PC-3 (cell line): ENCODE measurements at regions of chr5 and their contacts with region 1.

Region 1: GRCh38 chr5:78886341-78887230 is 98.5 kb downstream of the ARSB start:
- DNase-seq: peak; percentile 32
- ATAC-seq: no peak
- H3K4me3 ChIP-seq: no peak overlapping the region
- H3K27ac ChIP-seq: no peak overlapping the region
- H3K4me1 ChIP-seq: 0 out of 2 replicates have a peak, but pooled peaks cover 5% of the 10 kb centered on the region
- H3K27me3 ChIP-seq: no peaks in the 10 kb centered on the region
- CTCF ChIP-seq: peak; percentile 66

Region 2: GRCh38 chr5:78648359-78649210 is 238.0 kb before region 1 on chr5 and contains the start of gene LHFPL2:
- CTCF ChIA-PET with region 1: no interaction called
- POLR2A ChIA-PET with region 1: no interaction called
- intact Hi-C with region 1: loop called (anchors 10 kb)
- DNase-seq: peak; percentile 59
- ATAC-seq: peak; percentile 74
- H3K4me3 ChIP-seq: peak within 1 kb of the TSS; percentile 77
- H3K27ac ChIP-seq: peak within 1 kb of the TSS; percentile 70
- H3K4me1 ChIP-seq: peaks cover 26% of the 10 kb centered on the region
- H3K27me3 ChIP-seq: no peaks in the 10 kb centered on the region
- CTCF ChIP-seq: no peak
- total RNA-seq, gene LHFPL2: 19.4 and 21.7 TPM in 2 replicates

Region 3: GRCh38 chr5:78811121-78811817 is 75.3 kb before region 1 on chr5:
- CTCF ChIA-PET with region 1: no interaction called
- POLR2A ChIA-PET with region 1: no interaction called
- intact Hi-C with region 1: loop called (anchors 10 kb)
- DNase-seq: no peak
- ATAC-seq: no peak
- H3K4me3 ChIP-seq: no peak overlapping the region
- H3K27ac ChIP-seq: no peak overlapping the region
- H3K4me1 ChIP-seq: peaks cover 11% of the 10 kb centered on the region
- H3K27me3 ChIP-seq: no peaks in the 10 kb centered on the region
- CTCF ChIP-seq: no peak

Region 4: DNA sequence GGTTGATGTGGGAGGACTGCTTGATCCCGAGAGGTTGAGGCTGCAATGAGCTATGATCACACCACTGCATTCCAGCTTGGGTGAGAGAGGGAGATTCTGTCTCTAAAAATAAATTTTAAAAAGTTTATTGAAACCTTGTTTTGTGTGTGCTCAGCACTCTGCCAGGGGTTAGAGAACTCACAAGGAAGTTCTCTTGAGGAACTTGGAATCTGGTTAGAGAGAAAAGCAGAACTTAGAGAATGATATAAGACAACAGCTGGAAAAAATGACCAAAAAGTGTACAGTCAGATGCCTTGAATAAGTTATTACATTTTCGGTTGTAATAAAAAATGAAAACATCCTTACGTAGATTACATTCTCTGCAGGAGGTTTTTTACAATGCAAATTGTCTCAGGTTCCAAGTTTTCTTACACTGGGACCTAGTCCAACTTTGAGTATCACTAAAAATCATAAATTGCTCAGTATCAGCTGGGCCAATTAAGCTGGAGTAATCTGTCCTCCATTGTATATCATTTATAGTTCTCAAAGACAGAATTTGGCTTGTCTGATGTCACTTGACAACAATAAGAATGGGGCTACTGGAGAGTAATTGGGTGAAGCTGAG is 703.9 kb after region 1 on chr5:
- CTCF ChIA-PET with region 1: no interaction called
- POLR2A ChIA-PET with region 1: no interaction called
- intact Hi-C with region 1: no loop called
- DNase-seq: no peak
- ATAC-seq: no peak
- H3K4me3 ChIP-seq: no peak overlapping the region
- H3K27ac ChIP-seq: no peak overlapping the region
- H3K4me1 ChIP-seq: no peaks in the 10 kb centered on the region
- H3K27me3 ChIP-seq: no peaks in the 10 kb centered on the region
- CTCF ChIP-seq: no peak